Adrenal gland (tissue), 19 donors: ENCODE measurements at regions of chr6 and their contacts with region 1.

Region 1: GRCh38 chr6:12605888-12606345 is 110.7 kb upstream of the PHACTR1 start:
- DNase-seq: peak; percentile 50 to 75 (median 67)
- H3K4me3 ChIP-seq: no peak overlapping the region
- H3K27ac ChIP-seq: no peak overlapping the region
- H3K4me1 ChIP-seq: peaks cover 0 to 9% of the 10 kb centered on the region in 2 donors
- H3K27me3 ChIP-seq: no peaks in the 10 kb centered on the region
- CTCF ChIP-seq: peak; percentile 64 to 83 (median 78)
- POLR2A ChIP-seq: no peak

Region 2: DNA sequence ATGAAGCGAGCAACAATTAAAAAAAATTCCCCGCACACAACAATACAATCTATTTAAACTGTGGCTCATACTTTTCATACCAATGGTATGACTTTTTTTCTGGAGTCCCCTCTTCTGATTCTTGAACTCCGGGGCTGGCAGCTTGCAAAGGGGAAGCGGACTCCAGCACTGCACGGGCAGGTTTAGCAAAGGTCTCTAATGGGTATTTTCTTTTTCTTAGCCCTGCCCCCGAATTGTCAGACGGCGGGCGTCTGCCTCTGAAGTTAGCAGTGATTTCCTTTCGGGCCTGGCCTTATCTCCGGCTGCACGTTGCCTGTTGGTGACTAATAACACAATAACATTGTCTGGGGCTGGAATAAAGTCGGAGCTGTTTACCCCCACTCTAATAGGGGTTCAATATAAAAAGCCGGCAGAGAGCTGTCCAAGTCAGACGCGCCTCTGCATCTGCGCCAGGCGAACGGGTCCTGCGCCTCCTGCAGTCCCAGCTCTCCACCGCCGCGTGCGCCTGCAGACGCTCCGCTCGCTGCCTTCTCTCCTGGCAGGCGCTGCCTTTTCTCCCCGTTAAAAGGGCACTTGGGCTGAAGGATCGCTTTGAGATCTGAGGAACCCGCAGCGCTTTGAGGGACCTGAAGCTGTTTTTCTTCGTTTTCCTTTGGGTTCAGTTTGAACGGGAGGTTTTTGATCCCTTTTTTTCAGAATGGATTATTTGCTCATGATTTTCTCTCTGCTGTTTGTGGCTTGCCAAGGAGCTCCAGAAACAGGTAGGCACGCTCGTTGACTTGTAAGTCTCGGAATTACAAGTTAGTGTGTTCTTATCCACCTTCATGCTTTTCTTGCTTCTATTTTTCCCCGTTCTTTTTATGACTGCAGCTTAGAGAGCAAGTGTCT is 315.7 kb before region 1 on chr6 and contains the start of gene EDN1:
- intact Hi-C with region 1: loop called (anchors 5 to 10 kb)
- DNase-seq: peak; percentile 70 to 87 (median 77)
- H3K4me3 ChIP-seq: peak within 1 kb of the TSS in 2 of 4 donors; percentile 49 to 54
- H3K27ac ChIP-seq: peak within 1 kb of the TSS in 3 of 5 donors; percentile 35 to 60 (median 52)
- H3K4me1 ChIP-seq: peaks cover 3 to 14% of the 10 kb centered on the region in 2 donors
- H3K27me3 ChIP-seq: no peaks in the 10 kb centered on the region
- CTCF ChIP-seq: peak; percentile 23 to 64 (median 48)
- POLR2A ChIP-seq: peak in 1 of 2 donors; percentile 66
- total RNA-seq, gene EDN1: 0.18 to 7.9 (median 1.3) TPM

Region 3: DNA sequence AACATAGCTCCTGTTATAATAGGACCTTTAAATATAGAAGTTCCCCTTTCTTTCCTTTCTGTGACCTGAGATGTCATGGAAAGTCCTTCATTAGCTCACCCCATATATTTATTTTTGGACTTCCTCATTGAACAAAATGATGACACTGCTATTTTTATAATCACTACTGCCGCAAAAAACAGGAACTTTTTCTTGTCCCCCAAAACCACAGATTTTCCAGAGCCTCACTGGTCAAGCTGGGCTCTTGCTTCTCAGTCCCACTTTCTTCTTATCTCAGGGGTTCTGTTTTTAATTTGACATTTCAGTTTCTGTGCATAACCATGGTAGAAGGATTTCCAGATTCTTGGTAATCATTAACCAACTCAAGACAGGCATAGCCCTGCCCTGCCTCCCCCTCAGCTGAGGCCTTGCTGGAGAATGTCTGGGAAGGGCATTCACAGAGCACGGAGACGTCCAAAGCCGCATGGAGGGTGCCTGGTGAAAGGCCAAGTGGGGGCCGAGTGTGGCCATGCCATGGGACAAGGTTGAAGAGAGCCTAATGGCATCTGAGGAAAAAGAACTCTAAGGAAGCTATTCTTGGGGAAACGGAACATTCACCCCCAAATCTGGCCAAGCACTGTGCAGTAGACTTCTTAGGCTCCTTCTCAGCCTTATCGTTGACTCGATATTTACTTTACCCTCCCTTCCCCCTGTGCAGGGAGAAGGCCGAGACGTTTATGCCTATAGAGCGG is 242.1 kb before region 1 on chr6:
- intact Hi-C with region 1: no loop called
- DNase-seq: no peak
- H3K4me3 ChIP-seq: no peak overlapping the region
- H3K27ac ChIP-seq: no peak overlapping the region
- H3K4me1 ChIP-seq: no peaks in the 10 kb centered on the region
- H3K27me3 ChIP-seq: no peaks in the 10 kb centered on the region
- CTCF ChIP-seq: no peak
- POLR2A ChIP-seq: no peak

Region 4: DNA sequence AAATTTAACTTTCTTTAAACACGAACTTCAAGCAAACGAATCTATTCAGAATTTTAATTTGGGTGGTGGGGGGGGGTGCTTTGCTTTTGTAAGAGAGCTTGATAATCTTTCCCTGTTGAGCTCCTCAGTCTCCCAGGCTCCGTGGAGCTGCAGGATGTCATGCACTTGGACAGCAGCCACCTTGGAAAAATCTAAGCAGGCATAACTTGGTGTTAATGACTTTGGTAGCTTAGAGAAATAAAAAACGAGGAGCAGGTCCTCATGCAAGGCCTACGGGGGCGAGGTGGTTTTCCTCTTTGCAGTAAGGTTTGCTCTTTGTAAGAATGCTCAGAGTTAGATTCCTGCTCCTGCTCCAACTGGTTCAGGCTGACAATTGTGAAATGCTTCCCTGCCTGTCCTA is 213.4 kb before region 1 on chr6:
- intact Hi-C with region 1: loop called in 1 of 2 experiments (anchors 5 kb)
- DNase-seq: no peak
- H3K4me3 ChIP-seq: no peak overlapping the region
- H3K27ac ChIP-seq: no peak overlapping the region
- H3K4me1 ChIP-seq: no peaks in the 10 kb centered on the region
- H3K27me3 ChIP-seq: no peaks in the 10 kb centered on the region
- CTCF ChIP-seq: no peak
- POLR2A ChIP-seq: no peak

Region 5: GRCh38 chr6:12490904-12491571 is 114.9 kb before region 1 on chr6:
- intact Hi-C with region 1: loop called in 1 of 2 experiments (anchors 10 kb)
- DNase-seq: peak; percentile 53 to 87 (median 82)
- H3K4me3 ChIP-seq: no peak overlapping the region
- H3K27ac ChIP-seq: peak overlapping the region; percentile 49 to 81 (median 67)
- H3K4me1 ChIP-seq: peaks cover 12 to 30% of the 10 kb centered on the region in 2 donors
- H3K27me3 ChIP-seq: no peaks in the 10 kb centered on the region
- CTCF ChIP-seq: no peak
- POLR2A ChIP-seq: no peak

Region 6: DNA sequence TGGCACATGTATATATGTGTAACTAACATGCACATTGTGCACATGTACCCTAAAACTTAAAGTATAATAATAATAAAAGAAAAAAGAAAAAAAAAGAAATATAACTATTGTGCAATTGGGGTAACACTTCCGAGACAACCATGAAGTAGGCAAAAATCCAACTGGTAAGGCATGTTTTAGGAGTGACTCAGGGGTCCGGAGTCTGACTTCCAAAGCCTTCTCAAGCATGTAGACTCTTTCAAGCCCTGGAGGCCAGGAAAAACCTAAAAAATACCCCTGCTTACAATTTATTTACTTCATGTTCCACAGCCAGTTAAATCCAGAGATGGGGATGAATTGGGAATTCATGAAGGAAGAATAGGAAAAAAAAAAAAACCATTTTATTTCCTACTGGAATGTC is 50.6 kb before region 1 on chr6:
- intact Hi-C with region 1: no loop called
- DNase-seq: no peak
- H3K4me3 ChIP-seq: no peak overlapping the region
- H3K27ac ChIP-seq: no peak overlapping the region
- H3K4me1 ChIP-seq: no peaks in the 10 kb centered on the region
- H3K27me3 ChIP-seq: no peaks in the 10 kb centered on the region
- CTCF ChIP-seq: no peak
- POLR2A ChIP-seq: no peak